OCI-LY7 (cell line): ENCODE measurements at regions of chr1 and their contacts with region 1.

Region 1: GRCh38 chr1:104238991-104239390 is 489.3 kb downstream of the AMY1C start:
- DNase-seq: no peak
- H3K4me3 ChIP-seq: no peak overlapping the region
- H3K27ac ChIP-seq: no peak overlapping the region
- H3K4me1 ChIP-seq: no peaks in the 10 kb centered on the region
- CTCF ChIP-seq: no peak

Region 2: DNA sequence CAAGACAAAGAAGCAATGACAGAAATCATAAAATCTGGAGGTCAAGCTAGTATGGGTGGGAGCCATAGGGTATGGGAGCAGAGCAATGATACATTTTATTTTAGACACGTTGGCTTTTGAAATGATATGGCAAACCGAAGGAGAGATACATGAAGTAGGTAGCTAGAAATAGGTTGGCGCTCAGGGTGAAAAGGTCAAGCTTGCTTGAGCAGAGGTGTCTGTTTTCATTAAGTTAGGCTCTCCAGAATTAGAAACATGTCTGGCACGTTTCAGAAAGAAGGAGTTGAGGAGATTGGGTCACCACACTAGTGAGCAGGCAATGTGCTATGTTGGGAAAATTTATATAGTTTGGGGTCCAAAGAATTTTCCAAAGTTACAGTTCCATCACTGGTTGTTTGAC is 337.9 kb before region 1 on chr1:
- CTCF ChIA-PET with region 1: no interaction called
- POLR2A ChIA-PET with region 1: interaction called, 10 read pairs
- intact Hi-C with region 1: no loop called
- DNase-seq: no peak
- H3K4me3 ChIP-seq: no peak overlapping the region
- H3K27ac ChIP-seq: no peak overlapping the region
- H3K4me1 ChIP-seq: no peaks in the 10 kb centered on the region
- CTCF ChIP-seq: no peak